HCT116 (cell line): ENCODE measurements at regions of chr9 and their contacts with region 1.

Region 1: GRCh38 chr9:12775679-12776512 is 1.1 kb downstream of the LURAP1L start:
- DNase-seq: peak; percentile 57
- ATAC-seq: peak; percentile 90
- H3K4me3 ChIP-seq: peak overlapping the region; percentile 75 to 82
- H3K27ac ChIP-seq: peak overlapping the region; percentile 66
- H3K4me1 ChIP-seq: peaks cover 0 to 22% of the 10 kb centered on the region in 2 experiments; a peak in 2 of 4 replicates
- H3K27me3 ChIP-seq: no peaks in the 10 kb centered on the region
- CTCF ChIP-seq: peak; percentile 23 to 45 (median 28); a peak in 4 of 6 replicates
- POLR2A ChIP-seq: no peak
- RAD21 ChIP-seq: peak; percentile 56

Region 2: DNA sequence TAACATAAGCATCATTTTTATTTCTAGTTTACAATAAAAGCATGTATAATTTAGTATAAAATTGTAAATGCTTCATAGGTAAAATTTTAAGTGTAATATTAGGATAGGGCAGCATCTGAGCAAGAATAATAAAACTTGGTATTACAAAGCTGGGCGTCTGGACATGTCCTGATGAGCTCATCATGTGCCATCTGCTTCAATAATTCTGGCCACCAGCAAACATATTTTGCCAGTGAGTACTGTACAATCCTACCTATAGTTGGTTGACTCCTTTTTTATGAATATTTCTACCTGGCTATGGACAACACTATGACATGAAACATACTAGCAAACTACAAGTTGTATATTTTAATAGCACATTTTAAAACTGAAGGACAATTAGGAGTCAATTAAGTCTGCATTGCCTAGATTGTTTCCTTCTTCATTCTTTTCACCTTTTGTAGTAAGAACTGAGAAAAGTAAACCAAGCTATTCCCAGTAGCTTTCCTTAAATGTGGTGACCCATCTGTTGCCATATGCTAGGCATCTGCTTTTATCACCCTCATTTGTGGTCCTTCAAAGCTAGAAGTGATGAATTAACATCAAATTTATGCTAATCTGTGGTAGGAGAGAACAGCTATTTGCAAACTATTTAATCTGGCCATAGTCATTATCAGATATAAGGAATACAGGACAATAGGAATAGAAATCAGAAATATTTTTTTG is 22.3 kb after region 1 on chr9:
- CTCF ChIA-PET with region 1: interaction called, 5 read pairs
- POLR2A ChIA-PET with region 1: interaction called, 10 read pairs
- RAD21 ChIA-PET with region 1: no interaction called
- intact Hi-C with region 1: no loop called
- DNase-seq: no peak
- ATAC-seq: no peak
- H3K4me3 ChIP-seq: no peak overlapping the region
- H3K27ac ChIP-seq: no peak overlapping the region
- H3K4me1 ChIP-seq: no peaks in the 10 kb centered on the region
- H3K27me3 ChIP-seq: no peaks in the 10 kb centered on the region
- CTCF ChIP-seq: no peak
- POLR2A ChIP-seq: no peak
- RAD21 ChIP-seq: no peak

Region 3: DNA sequence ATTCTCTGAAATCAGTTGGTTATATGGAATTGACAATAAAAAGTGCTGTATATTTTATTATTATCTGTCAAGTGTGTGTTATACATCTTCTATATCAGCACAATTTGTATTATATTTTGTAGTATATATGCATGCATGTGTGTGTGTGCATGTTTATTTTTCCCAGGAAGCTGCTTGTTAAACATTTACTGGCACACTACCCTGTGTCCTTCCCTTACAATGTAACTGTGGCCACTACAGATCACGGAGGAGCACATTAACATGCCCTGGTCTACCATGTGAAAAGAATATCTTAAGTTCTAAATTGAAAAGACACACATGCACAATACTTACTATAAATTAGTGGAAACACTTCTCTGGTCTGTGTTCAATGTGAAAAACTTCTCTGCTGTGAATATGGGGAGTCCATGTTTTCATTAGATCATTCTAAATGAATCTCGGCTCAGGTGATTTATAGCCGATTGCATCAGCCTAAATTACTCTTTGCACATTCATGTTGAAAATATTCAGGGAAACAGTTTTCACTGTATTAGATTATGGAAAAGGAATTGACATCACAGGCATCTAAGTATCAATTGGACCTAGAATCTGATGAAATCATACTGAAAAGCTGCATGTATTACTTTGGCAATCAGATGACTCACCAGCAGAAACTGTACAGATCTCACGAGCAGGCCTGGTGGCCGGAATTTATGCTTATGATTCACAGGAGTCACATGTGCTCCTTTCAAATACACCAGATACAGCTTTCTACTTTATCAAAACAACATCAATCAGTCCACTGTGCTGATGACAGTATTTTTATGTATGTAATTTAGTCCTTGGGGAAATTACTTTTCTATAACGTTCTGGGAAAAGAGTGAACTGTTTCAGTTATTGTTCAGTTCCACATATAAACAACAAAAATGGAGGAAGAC is 38.3 kb after region 1 on chr9:
- CTCF ChIA-PET with region 1: interaction called, 6 read pairs
- POLR2A ChIA-PET with region 1: interaction called, 19 read pairs
- RAD21 ChIA-PET with region 1: no interaction called
- intact Hi-C with region 1: loop called (anchors 2 kb)
- DNase-seq: peak; percentile 97
- ATAC-seq: peak; percentile 90
- H3K4me3 ChIP-seq: peak overlapping the region; percentile 32 to 45
- H3K27ac ChIP-seq: peak overlapping the region; percentile 78
- H3K4me1 ChIP-seq: peaks cover 29 to 43% of the 10 kb centered on the region in 2 experiments; a peak in 3 of 4 replicates
- H3K27me3 ChIP-seq: no peaks in the 10 kb centered on the region
- CTCF ChIP-seq: peak in 2 of 3 experiments; percentile 36 to 46; a peak in 4 of 6 replicates
- POLR2A ChIP-seq: no peak
- RAD21 ChIP-seq: peak; percentile 19

Region 4: GRCh38 chr9:12819436-12820185 is 43.7 kb after region 1 on chr9:
- CTCF ChIA-PET with region 1: interaction called, 6 read pairs
- POLR2A ChIA-PET with region 1: interaction called, 19 read pairs
- RAD21 ChIA-PET with region 1: no interaction called
- intact Hi-C with region 1: loop called (anchors 2 kb)
- DNase-seq: peak; percentile 28
- ATAC-seq: peak; percentile 80
- H3K4me3 ChIP-seq: no peak overlapping the region
- H3K27ac ChIP-seq: no peak overlapping the region
- H3K4me1 ChIP-seq: peaks cover 16 to 36% of the 10 kb centered on the region in 2 experiments; a peak in 3 of 4 replicates
- H3K27me3 ChIP-seq: no peaks in the 10 kb centered on the region
- CTCF ChIP-seq: peak; percentile 19 to 76 (median 68); a peak in 4 of 6 replicates
- POLR2A ChIP-seq: no peak
- RAD21 ChIP-seq: peak; percentile 45

Region 5: DNA sequence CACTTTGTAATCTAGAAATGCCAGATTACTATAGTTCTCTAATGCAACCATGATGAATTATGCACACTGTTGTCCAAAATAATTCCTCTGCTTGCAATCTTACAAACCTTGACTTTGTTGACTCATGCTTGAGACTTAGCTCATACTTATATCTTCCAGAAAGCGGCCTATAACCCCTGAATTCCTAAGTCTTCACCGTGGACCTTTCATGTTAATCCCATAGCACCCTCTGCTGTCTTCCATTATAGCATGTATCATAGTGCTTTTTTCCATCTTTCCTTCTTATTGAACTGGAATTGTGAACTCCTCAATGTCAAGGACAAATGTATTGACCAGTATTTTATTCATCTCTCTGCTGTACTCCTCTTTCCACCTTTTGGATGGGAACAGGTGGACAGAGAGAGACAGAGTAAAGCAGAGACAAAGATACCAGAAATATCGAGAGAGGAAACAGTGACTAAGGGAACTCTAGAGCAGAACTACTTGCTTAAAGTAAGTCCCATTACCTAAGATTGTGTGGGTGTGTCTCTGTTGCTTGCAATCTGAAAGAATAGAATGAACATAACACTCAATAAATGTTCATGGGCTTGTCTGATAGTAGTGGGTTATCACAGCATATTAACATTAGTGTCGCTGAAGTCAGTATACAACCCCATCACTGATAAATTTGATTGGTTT is 109.0 kb after region 1 on chr9:
- CTCF ChIA-PET with region 1: interaction called, 9 read pairs
- POLR2A ChIA-PET with region 1: no interaction called
- RAD21 ChIA-PET with region 1: interaction called in 1 of 2 experiments, 4 read pairs
- intact Hi-C with region 1: loop called (anchors 5 kb)
- DNase-seq: peak; percentile 55
- ATAC-seq: peak; percentile 87
- H3K4me3 ChIP-seq: no peak overlapping the region
- H3K27ac ChIP-seq: no peak overlapping the region
- H3K4me1 ChIP-seq: no peaks in the 10 kb centered on the region
- H3K27me3 ChIP-seq: no peaks in the 10 kb centered on the region
- CTCF ChIP-seq: peak; percentile 45 to 88 (median 60)
- POLR2A ChIP-seq: no peak
- RAD21 ChIP-seq: peak; percentile 94